ENCODE measurements at regions of chr14 and their contacts with region 1.

Region 1: DNA sequence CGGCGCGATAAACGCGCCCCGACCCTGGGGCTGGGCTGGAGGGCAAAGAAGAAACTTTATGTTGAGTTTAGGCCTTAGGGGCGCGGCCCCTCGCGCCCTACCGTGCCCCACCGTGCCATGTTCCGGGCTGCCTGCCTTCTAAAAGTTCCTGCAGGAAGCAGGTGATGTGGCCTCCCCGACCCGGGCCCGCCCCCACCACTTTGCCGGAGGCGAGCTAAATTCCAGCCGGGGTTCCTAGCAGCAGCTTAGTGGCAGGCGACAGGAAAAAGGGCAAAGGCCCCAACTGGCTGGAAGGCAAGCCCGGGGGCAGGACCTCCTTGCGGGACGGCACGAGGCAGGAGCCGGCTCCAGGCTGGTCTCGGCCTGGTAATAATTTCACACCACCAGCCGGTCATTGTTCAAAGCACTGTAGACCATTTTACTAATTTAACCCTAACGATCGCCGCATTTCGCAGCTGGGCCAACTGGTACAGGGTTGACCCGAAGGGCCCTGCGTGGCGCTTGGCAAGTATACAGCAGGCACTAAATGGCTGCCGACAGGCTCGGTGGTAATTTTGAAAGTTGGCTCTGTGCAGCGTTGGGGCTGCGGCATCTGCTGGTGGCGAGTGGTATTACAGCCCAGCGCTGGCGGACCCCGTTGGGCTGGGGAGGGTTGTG is 895 bp upstream of the CCDC88C start:
- DNase-seq: peak; percentile 71
- H3K4me3 Mint-ChIP-seq: peak overlapping the region; percentile 77
- H3K27ac Mint-ChIP-seq: peak overlapping the region; percentile 77
- H3K4me1 Mint-ChIP-seq: peaks cover 42% of the 10 kb centered on the region
- H3K27me3 Mint-ChIP-seq: peaks cover 3% of the 10 kb centered on the region

Region 2: GRCh38 chr14:90827916-90828610 is 590.5 kb before region 1 on chr14:
- intact Hi-C with region 1: loop called (anchors 10 kb)
- DNase-seq: peak; percentile 91
- H3K4me3 Mint-ChIP-seq: peak overlapping the region; percentile 76
- H3K27ac Mint-ChIP-seq: peak overlapping the region; percentile 88
- H3K4me1 Mint-ChIP-seq: peaks cover 28% of the 10 kb centered on the region
- H3K27me3 Mint-ChIP-seq: peaks cover 5% of the 10 kb centered on the region

Region 3: GRCh38 chr14:91244501-91244901 is 174.0 kb before region 1 on chr14 and contains the start of gene GPR68:
- intact Hi-C with region 1: loop called (anchors 2 kb)
- DNase-seq: no peak
- H3K4me3 Mint-ChIP-seq: peak within 1 kb of the TSS; percentile 85
- H3K27ac Mint-ChIP-seq: peak within 1 kb of the TSS; percentile 88
- H3K4me1 Mint-ChIP-seq: peaks cover 89% of the 10 kb centered on the region
- H3K27me3 Mint-ChIP-seq: no peaks in the 10 kb centered on the region
- total RNA-seq, gene GPR68: 4.5 and 5.4 TPM in 2 replicates

Region 4: DNA sequence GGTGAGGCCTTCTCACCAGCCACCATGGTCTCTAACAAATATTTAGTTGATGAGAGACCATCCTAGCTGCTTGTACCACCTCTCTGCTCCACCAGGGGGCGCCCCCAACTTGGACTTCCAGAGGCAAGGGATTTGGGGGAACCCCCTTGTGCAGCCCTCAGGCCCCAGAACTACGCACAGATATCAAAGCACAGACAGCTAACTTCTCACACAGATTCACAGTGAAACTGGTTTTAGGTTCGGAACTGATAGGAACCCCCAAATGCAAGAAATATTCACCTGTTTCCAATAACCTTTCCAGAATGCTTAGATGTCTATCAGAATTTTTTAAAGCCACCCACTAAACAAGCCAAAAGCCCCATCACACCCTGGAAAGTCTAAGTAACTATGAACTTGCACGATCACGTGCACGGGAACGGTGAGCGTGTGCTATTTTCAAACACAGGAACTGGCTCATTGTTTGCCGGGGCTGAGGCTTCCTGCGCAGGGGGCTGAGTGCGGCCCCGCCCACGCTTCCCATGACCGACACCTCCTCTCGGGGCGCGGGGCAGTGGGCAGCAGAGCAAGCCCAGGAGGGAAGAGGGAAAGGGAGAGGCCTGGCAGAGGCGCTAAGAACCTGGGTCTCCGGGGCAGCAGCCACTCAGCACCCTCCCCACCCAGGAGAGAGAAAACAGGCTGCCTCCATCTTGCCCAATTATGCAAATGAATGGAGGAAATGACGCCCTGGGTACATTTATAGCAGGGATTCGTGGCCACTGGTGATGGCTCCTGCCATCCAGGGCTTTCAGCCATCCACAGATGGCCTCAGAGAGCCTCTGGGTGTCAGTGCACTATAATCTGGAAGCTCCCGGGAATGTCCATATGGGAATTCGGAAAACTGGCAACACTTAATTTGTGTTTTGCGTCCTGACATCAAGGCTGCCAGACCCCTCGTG is 94.6 kb before region 1 on chr14:
- intact Hi-C with region 1: loop called (anchors 1 kb)
- DNase-seq: peak; percentile 84
- H3K4me3 Mint-ChIP-seq: peak overlapping the region; percentile 80
- H3K27ac Mint-ChIP-seq: peak overlapping the region; percentile 99
- H3K4me1 Mint-ChIP-seq: peaks cover 59% of the 10 kb centered on the region
- H3K27me3 Mint-ChIP-seq: no peaks in the 10 kb centered on the region

Region 5: GRCh38 chr14:91373591-91374254 is 44.8 kb before region 1 on chr14:
- intact Hi-C with region 1: loop called (anchors 1 kb)
- DNase-seq: peak; percentile 50
- H3K4me3 Mint-ChIP-seq: peak overlapping the region; percentile 75
- H3K27ac Mint-ChIP-seq: peak overlapping the region; percentile 94
- H3K4me1 Mint-ChIP-seq: peaks cover 91% of the 10 kb centered on the region
- H3K27me3 Mint-ChIP-seq: no peaks in the 10 kb centered on the region

Region 6: DNA sequence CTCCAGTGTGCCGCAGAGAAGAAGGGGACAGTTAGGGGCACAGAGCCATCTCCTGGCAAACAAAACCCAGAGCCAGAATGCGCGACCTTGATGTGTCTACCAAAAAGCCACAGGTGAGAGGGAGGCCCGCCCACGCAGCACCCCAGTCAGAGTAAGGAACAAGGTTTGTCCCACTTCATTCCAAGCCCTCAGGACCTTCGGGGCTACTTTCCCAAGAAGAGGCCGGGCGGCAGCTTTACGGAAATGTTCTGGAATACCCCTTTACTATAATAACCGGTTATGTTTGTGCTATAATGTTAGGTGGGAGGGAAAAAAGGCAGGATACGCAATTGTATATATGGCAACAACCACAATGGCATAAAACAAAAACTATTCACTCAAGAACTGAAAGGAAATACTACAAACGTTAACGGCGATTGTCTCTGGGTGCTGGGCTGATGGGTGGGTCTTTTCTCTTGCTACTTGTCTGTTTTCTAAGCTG is 13.2 kb before region 1 on chr14:
- intact Hi-C with region 1: loop called (anchors 1 kb)
- DNase-seq: peak; percentile 41
- H3K4me3 Mint-ChIP-seq: peak overlapping the region; percentile 63
- H3K27ac Mint-ChIP-seq: peak overlapping the region; percentile 82
- H3K4me1 Mint-ChIP-seq: peaks cover 86% of the 10 kb centered on the region
- H3K27me3 Mint-ChIP-seq: no peaks in the 10 kb centered on the region

Region 7: GRCh38 chr14:91510174-91511042 is 91.9 kb after region 1 on chr14 and contains the start of gene PPP4R3A:
- intact Hi-C with region 1: loop called (anchors 1 kb)
- DNase-seq: peak; percentile 91
- H3K4me3 Mint-ChIP-seq: peak within 1 kb of the TSS; percentile 98
- H3K27ac Mint-ChIP-seq: peak within 1 kb of the TSS; percentile 100
- H3K4me1 Mint-ChIP-seq: peaks cover 29% of the 10 kb centered on the region
- H3K27me3 Mint-ChIP-seq: peaks cover 5% of the 10 kb centered on the region
- total RNA-seq, gene PPP4R3A: 130 and 144 TPM in 2 replicates